Activated T-helper 1 cell treated with anti-CD3 and anti-CD28 coated beads, Interleukin-12 subunit alpha, Interleukin-12 subunit beta, Interleukin-2, Interleukin-4 antibody, amounts not matched to agents 30 ng/mL and 10 ng/mL and 1 ng/mL, durations not matched to agents 14 hours and 24 hours and 36 hours (primary cell): ENCODE measurements at regions of chr11 and their contacts with region 1.

Region 1: GRCh38 chr11:17504330-17505107 is 27.9 kb upstream of the ABCC8 start:
- DNase-seq: peak; percentile 68
- H3K4me3 Mint-ChIP-seq: no peak overlapping the region
- H3K27ac Mint-ChIP-seq: no peak overlapping the region
- H3K4me1 Mint-ChIP-seq: no peaks in the 10 kb centered on the region
- H3K27me3 Mint-ChIP-seq: peaks cover 11% of the 10 kb centered on the region

Region 2: DNA sequence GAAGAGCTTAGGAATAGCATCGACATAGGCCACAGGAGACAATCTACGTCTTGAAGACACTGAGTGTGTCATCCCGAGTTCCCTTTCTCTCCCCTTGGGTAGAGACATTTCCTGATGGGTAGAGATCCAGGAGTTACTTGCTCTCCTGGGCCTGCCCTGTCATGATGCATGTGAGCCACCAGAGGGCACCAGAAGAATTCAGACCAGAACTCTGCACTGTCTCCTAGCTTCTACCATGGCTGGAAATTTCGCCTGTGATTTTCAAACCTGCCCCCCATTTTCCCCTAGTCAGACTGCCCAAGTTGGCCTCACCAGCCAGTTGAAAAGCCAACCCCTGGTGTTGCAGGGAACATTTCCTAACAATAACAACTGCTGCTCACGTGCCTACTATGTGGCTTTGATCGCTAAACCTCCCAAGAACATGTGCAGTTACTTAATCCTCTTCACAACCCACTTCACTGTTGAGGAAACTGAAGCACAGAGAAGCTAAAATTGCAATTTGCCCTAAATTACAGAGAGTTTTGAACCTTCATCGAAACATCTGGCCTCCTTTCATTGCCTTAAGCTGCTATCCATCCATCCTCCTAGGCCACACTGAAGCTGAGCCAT is 718.9 kb before region 1 on chr11:
- intact Hi-C with region 1: loop called (anchors 5 kb)
- DNase-seq: peak; percentile 31
- H3K4me3 Mint-ChIP-seq: no peak overlapping the region
- H3K27ac Mint-ChIP-seq: no peak overlapping the region
- H3K4me1 Mint-ChIP-seq: no peaks in the 10 kb centered on the region
- H3K27me3 Mint-ChIP-seq: peaks cover 2% of the 10 kb centered on the region

Region 3: GRCh38 chr11:16935518-16936302 is 568.8 kb before region 1 on chr11:
- intact Hi-C with region 1: loop called (anchors 2 kb)
- DNase-seq: no peak
- H3K4me3 Mint-ChIP-seq: no peak overlapping the region
- H3K27ac Mint-ChIP-seq: no peak overlapping the region
- H3K4me1 Mint-ChIP-seq: no peaks in the 10 kb centered on the region
- H3K27me3 Mint-ChIP-seq: peaks cover 4% of the 10 kb centered on the region

Region 4: GRCh38 chr11:17384002-17384511 is 120.5 kb before region 1 on chr11:
- intact Hi-C with region 1: loop called (anchors 1 kb)
- DNase-seq: peak; percentile 50
- H3K4me3 Mint-ChIP-seq: no peak overlapping the region
- H3K27ac Mint-ChIP-seq: no peak overlapping the region
- H3K4me1 Mint-ChIP-seq: no peaks in the 10 kb centered on the region
- H3K27me3 Mint-ChIP-seq: peaks cover 11% of the 10 kb centered on the region

Region 5: DNA sequence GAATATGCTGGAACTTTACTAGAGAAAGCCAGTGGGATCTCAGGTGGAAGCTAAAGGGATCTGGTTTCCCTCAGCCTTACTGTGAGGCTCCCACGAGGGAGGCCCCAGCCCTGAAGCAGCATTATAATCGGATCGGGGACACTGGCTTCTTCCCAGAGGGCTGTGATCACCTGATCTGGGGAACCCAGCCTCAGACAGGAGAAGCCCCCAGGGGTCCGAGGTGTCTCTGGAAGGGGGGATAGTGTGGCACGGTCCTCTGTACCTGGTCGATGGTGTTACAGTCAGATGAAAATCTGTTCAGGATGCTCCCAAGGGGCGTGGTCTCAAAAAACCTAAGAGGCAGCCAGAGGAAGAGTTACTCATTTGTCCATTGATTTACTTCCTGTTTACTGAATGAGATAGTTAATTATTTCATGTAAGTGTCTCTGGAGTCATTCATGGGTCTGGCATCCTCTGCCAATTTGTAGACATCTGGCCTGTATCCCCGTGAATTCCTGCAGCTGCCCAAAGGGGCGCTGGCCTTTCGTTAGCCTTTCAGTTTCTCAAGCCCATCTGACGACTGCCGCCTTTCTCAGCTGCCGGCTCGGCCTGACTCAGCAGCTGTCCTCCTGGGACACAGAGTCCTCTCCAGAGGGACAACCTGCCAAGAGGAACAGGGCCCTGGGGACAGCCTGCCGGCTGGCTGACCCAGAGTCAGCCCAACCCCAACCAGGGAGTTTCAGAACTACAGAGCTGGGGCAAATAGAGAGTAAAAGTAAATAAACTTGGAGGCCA is 99.1 kb before region 1 on chr11:
- intact Hi-C with region 1: no loop called
- DNase-seq: no peak
- H3K4me3 Mint-ChIP-seq: no peak overlapping the region
- H3K27ac Mint-ChIP-seq: no peak overlapping the region
- H3K4me1 Mint-ChIP-seq: no peaks in the 10 kb centered on the region
- H3K27me3 Mint-ChIP-seq: peaks cover 3% of the 10 kb centered on the region

Region 6: GRCh38 chr11:17528181-17528691 is 23.7 kb after region 1 on chr11:
- intact Hi-C with region 1: no loop called
- DNase-seq: peak; percentile 3
- H3K4me3 Mint-ChIP-seq: no peak overlapping the region
- H3K27ac Mint-ChIP-seq: no peak overlapping the region
- H3K4me1 Mint-ChIP-seq: no peaks in the 10 kb centered on the region
- H3K27me3 Mint-ChIP-seq: no peaks in the 10 kb centered on the region